IMR-90 (cell line): ENCODE measurements at regions of chr7 and their contacts with region 1.

Region 1: DNA sequence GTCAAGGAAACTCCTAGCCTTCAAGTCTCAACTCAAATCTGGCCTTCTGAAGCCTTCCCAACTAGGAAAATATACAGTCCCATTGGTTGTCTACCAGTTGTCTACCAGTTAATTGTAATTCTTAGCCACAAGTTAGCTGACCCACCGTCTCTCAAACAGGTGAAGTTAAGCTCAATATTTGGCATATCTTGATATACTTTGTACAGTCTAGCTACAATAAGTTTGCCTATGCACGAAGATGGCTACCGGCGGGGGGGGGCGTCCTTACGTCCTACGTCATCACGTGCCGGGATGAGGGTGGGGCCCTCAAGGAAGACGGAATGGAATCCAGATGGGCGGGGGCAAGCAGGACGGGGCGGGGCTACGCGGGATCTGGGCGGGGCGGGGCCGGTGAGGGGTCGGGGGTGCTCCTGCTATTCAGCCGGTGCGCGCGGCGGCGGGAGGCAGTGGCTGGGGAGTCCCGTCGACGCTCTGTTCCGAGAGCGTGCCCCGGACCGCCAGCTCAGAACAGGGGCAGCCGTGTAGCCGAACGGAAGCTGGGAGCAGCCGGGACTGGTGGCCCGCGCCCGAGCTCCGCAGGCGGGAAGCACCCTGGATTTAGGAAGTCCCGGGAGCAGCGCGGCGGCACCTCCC is at the start of gene AHR:
- DNase-seq: peak; percentile 95
- ATAC-seq: peak; percentile 90
- H3K4me3 ChIP-seq: peak within 1 kb of the TSS; percentile 98
- H3K27ac ChIP-seq: peak within 1 kb of the TSS; percentile 77
- H3K4me1 ChIP-seq: peaks cover 2% of the 10 kb centered on the region; the same call in 1 of the 2 replicates
- H3K27me3 ChIP-seq: no peaks in the 10 kb centered on the region
- CTCF ChIP-seq: no peak
- POLR2A ChIP-seq: peak; percentile 84
- RAD21 ChIP-seq: no peak; the same call in 1 of the 2 replicates
- total RNA-seq, gene AHR: 55.2 and 67.2 TPM in 2 replicates

Region 2: GRCh38 chr7:16926283-16926682 is 372.0 kb before region 1 on chr7:
- CTCF ChIA-PET with region 1: no interaction called
- POLR2A ChIA-PET with region 1: no interaction called
- dilution Hi-C with region 1: no loop called
- in situ Hi-C with region 1: no loop called
- intact Hi-C with region 1: loop called (anchors 2 kb)
- DNase-seq: peak; percentile 54
- ATAC-seq: peak; percentile 95
- H3K4me3 ChIP-seq: no peak overlapping the region
- H3K27ac ChIP-seq: no peak overlapping the region
- H3K4me1 ChIP-seq: peaks cover 3% of the 10 kb centered on the region
- H3K27me3 ChIP-seq: no peaks in the 10 kb centered on the region
- CTCF ChIP-seq: peak; percentile 72
- POLR2A ChIP-seq: no peak
- RAD21 ChIP-seq: peak; percentile 82

Region 3: DNA sequence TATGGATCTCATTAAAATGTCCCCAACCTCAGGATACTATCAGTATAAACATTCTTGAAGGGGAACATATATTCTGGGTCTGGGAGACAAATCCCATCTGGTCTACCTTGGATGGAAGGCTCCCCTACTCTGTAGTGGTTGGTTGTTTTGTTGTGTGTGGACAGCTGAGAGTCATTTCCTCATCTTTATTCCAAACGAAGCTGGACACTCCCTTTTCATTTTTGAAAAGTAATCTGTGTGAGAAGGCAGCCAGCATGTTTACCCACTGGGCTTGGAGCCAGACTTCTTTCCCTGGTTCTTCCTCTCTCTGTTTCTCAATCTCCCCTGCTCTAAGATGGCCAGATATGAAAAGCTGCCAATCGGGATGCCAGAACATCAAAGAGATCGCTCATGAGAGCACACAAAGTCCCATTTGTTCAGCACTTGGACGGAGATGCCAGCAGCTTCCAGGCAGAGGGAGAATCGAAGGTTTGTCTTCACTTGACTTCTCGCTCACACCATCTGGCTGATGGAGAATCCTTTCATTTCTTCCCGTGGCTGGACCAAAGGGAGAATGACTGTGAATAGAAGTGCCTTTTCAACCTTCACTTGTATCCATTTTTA is 308.4 kb before region 1 on chr7:
- CTCF ChIA-PET with region 1: no interaction called
- POLR2A ChIA-PET with region 1: no interaction called
- dilution Hi-C with region 1: no loop called
- in situ Hi-C with region 1: no loop called
- intact Hi-C with region 1: loop called (anchors 2 kb)
- DNase-seq: peak; percentile 80
- ATAC-seq: peak; percentile 94
- H3K4me3 ChIP-seq: peak overlapping the region; percentile 6; the same call in 1 of the 2 replicates
- H3K27ac ChIP-seq: peak overlapping the region; percentile 66
- H3K4me1 ChIP-seq: no peaks in the 10 kb centered on the region; the same call in 1 of the 2 replicates
- H3K27me3 ChIP-seq: no peaks in the 10 kb centered on the region
- CTCF ChIP-seq: no peak
- POLR2A ChIP-seq: no peak
- RAD21 ChIP-seq: no peak

Region 4: GRCh38 chr7:17063045-17063383 is 235.3 kb before region 1 on chr7:
- CTCF ChIA-PET with region 1: no interaction called
- POLR2A ChIA-PET with region 1: no interaction called
- dilution Hi-C with region 1: no loop called
- in situ Hi-C with region 1: no loop called
- intact Hi-C with region 1: loop called (anchors 5 kb)
- DNase-seq: peak; percentile 25
- ATAC-seq: peak; percentile 80
- H3K4me3 ChIP-seq: no peak overlapping the region
- H3K27ac ChIP-seq: no peak overlapping the region
- H3K4me1 ChIP-seq: no peaks in the 10 kb centered on the region
- H3K27me3 ChIP-seq: no peaks in the 10 kb centered on the region
- CTCF ChIP-seq: peak; percentile 40
- POLR2A ChIP-seq: no peak
- RAD21 ChIP-seq: no peak

Region 5: GRCh38 chr7:17275749-17276671 is 22.3 kb before region 1 on chr7:
- CTCF ChIA-PET with region 1: interaction called, 8 read pairs
- POLR2A ChIA-PET with region 1: interaction called, 5 read pairs
- dilution Hi-C with region 1: no loop called
- in situ Hi-C with region 1: no loop called
- intact Hi-C with region 1: loop called (anchors 2 kb)
- DNase-seq: peak; percentile 97
- ATAC-seq: peak; percentile 96
- H3K4me3 ChIP-seq: no peak overlapping the region
- H3K27ac ChIP-seq: peak overlapping the region; percentile 84
- H3K4me1 ChIP-seq: peaks cover 3% of the 10 kb centered on the region; the same call in 1 of the 2 replicates
- H3K27me3 ChIP-seq: no peaks in the 10 kb centered on the region
- CTCF ChIP-seq: no peak
- POLR2A ChIP-seq: 0 out of 2 replicates have a peak, but pooled peaks have one; percentile 36
- RAD21 ChIP-seq: 0 out of 2 replicates have a peak, but pooled peaks have one; percentile 4

Region 6: GRCh38 chr7:17646253-17646956 is 348.1 kb after region 1 on chr7:
- CTCF ChIA-PET with region 1: interaction called, 4 read pairs
- POLR2A ChIA-PET with region 1: no interaction called
- dilution Hi-C with region 1: no loop called
- in situ Hi-C with region 1: loop called (anchors 10 kb)
- intact Hi-C with region 1: loop called (anchors 2 kb)
- DNase-seq: peak; percentile 66
- ATAC-seq: peak; percentile 79
- H3K4me3 ChIP-seq: no peak overlapping the region
- H3K27ac ChIP-seq: no peak overlapping the region
- H3K4me1 ChIP-seq: peaks cover 8% of the 10 kb centered on the region
- H3K27me3 ChIP-seq: no peaks in the 10 kb centered on the region
- CTCF ChIP-seq: peak; percentile 71
- POLR2A ChIP-seq: no peak
- RAD21 ChIP-seq: peak; percentile 78